ENCODE measurements at regions of chr12 and their contacts with region 1.

Region 1: GRCh38 chr12:12837025-12837872 is 24.1 kb downstream of the DDX47 start:
- DNase-seq: peak; percentile 86
- H3K4me3 ChIP-seq: no peak overlapping the region
- H3K27ac ChIP-seq: peak overlapping the region; percentile 91
- H3K4me1 ChIP-seq: peaks cover 55% of the 10 kb centered on the region
- H3K27me3 ChIP-seq: no peaks in the 10 kb centered on the region
- CTCF ChIP-seq: peak; percentile 46 to 51
- POLR2A ChIP-seq: no peak

Region 2: GRCh38 chr12:12491606-12492005 is 345.6 kb before region 1 on chr12:
- CTCF ChIA-PET with region 1: no interaction called
- POLR2A ChIA-PET with region 1: no interaction called
- dilution Hi-C with region 1: no loop called
- intact Hi-C with region 1: no loop called
- DNase-seq: no peak
- H3K4me3 ChIP-seq: no peak overlapping the region
- H3K27ac ChIP-seq: no peak overlapping the region
- H3K4me1 ChIP-seq: peaks cover 10% of the 10 kb centered on the region
- H3K27me3 ChIP-seq: no peaks in the 10 kb centered on the region
- CTCF ChIP-seq: no peak
- POLR2A ChIP-seq: no peak

Region 3: GRCh38 chr12:12786716-12787601 is 50.3 kb before region 1 on chr12:
- CTCF ChIA-PET with region 1: interaction called, 40 read pairs
- POLR2A ChIA-PET with region 1: interaction called, 3 read pairs
- dilution Hi-C with region 1: no loop called
- intact Hi-C with region 1: loop called (anchors 2 kb)
- DNase-seq: peak; percentile 88
- H3K4me3 ChIP-seq: peak overlapping the region; percentile 6 to 44 (median 39)
- H3K27ac ChIP-seq: peak overlapping the region; percentile 78
- H3K4me1 ChIP-seq: peaks cover 43% of the 10 kb centered on the region
- H3K27me3 ChIP-seq: no peaks in the 10 kb centered on the region
- CTCF ChIP-seq: peak in 1 of 2 donors; percentile 8
- POLR2A ChIP-seq: peak; percentile 91

Region 4: DNA sequence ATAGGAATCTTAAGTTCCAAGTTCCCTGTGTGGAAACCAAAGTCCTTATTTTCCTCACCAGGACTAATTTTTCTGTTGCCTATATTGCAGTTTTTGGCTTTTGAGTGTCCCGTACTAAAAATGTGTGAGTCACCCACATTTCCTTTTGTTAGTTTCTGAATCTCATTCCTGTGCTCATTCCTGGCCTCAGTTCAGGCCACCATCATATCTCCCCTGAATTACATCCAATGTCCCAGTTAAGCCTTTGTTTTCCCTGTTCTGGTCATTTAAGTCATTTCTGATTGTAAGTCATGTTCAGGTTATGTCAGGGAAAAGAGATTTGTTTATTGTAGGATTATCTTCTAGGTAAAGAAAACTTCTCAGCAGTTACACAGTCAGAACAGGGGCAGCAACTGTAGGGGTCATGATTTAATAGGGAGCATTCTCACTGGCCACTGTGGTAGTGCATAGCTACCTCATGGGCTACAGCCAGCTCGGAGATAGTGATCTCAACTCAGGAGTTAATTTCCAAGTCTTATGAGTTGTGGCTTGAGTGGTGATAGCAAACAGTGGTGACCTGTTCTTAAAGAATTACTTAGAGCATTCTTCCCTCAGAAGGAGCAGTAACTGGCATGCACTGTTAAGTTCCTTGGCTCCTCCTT is 17.5 kb before region 1 on chr12:
- CTCF ChIA-PET with region 1: interaction called, 25 read pairs
- POLR2A ChIA-PET with region 1: interaction called, 4 read pairs
- dilution Hi-C with region 1: no loop called
- intact Hi-C with region 1: no loop called
- DNase-seq: peak; percentile 85
- H3K4me3 ChIP-seq: peak overlapping the region in 1 of 3 experiments; percentile 15
- H3K27ac ChIP-seq: peak overlapping the region; percentile 93
- H3K4me1 ChIP-seq: peaks cover 49% of the 10 kb centered on the region
- H3K27me3 ChIP-seq: no peaks in the 10 kb centered on the region
- CTCF ChIP-seq: no peak
- POLR2A ChIP-seq: no peak

Region 5: GRCh38 chr12:12899530-12900380 is 62.5 kb after region 1 on chr12:
- CTCF ChIA-PET with region 1: interaction called, 51 read pairs
- POLR2A ChIA-PET with region 1: interaction called, 3 read pairs
- dilution Hi-C with region 1: no loop called
- intact Hi-C with region 1: no loop called
- DNase-seq: peak; percentile 81
- H3K4me3 ChIP-seq: no peak overlapping the region
- H3K27ac ChIP-seq: peak overlapping the region; percentile 91
- H3K4me1 ChIP-seq: peaks cover 49% of the 10 kb centered on the region
- H3K27me3 ChIP-seq: no peaks in the 10 kb centered on the region
- CTCF ChIP-seq: no peak
- POLR2A ChIP-seq: no peak

Region 6: GRCh38 chr12:12983420-12984035 is 146.3 kb after region 1 on chr12:
- CTCF ChIA-PET with region 1: interaction called, 55 read pairs
- POLR2A ChIA-PET with region 1: no interaction called
- dilution Hi-C with region 1: loop called (anchors 10 kb)
- intact Hi-C with region 1: loop called (anchors 1 kb)
- DNase-seq: peak; percentile 78
- H3K4me3 ChIP-seq: no peak overlapping the region
- H3K27ac ChIP-seq: peak overlapping the region; percentile 25
- H3K4me1 ChIP-seq: peaks cover 20% of the 10 kb centered on the region
- H3K27me3 ChIP-seq: no peaks in the 10 kb centered on the region
- CTCF ChIP-seq: peak; percentile 56 to 60
- POLR2A ChIP-seq: no peak

Region 7: DNA sequence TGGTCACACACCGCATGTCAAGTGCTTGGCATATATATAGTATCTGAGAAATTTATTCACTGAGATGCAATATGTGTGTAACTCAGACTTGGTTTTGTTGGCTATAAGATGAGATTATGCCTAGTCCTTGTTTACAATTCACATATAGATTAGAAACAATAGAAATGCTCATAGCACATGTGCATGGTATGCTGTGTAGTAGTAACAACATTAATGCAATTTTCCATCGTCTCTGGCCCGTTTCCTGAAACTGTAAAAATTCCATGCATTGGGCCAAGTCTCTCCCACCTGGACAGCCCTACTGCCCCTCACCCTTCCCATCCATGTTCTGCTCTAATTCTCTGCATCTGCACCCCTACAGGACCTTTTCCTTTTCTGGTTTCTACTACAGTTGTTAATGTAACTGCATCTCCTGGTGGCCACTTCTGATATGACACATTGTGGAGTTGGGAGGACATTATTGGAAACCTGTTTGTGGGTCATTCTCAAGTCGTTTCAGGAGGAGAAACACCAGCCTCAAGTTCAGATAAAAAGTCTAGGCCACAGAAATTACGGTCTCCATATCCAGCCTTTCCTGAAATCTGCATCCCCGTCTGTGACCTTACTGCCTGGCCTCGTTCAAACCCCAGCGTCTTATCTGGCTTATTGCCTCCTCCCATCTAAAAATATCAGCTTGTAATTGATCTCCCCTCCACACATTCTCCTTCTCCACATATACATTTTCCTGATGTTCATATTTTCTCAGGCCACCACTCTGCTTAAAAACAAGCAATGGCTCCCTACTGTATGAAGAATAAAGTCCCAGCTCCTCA is 396.8 kb after region 1 on chr12:
- CTCF ChIA-PET with region 1: interaction called, 3 read pairs
- POLR2A ChIA-PET with region 1: no interaction called
- dilution Hi-C with region 1: no loop called
- intact Hi-C with region 1: loop called (anchors 5 kb)
- DNase-seq: peak; percentile 77
- H3K4me3 ChIP-seq: no peak overlapping the region
- H3K27ac ChIP-seq: no peak overlapping the region
- H3K4me1 ChIP-seq: peaks cover 3% of the 10 kb centered on the region
- H3K27me3 ChIP-seq: no peaks in the 10 kb centered on the region
- CTCF ChIP-seq: peak; percentile 70 to 83
- POLR2A ChIP-seq: no peak

Measured in endothelial cell of umbilical vein (primary cell).